Activated naive CD4-positive, alpha-beta T cell treated with anti-CD3 and anti-CD28 coated beads for 36 hours (primary cell): ENCODE measurements at regions of chr20 and their contacts with region 1.

Region 1: DNA sequence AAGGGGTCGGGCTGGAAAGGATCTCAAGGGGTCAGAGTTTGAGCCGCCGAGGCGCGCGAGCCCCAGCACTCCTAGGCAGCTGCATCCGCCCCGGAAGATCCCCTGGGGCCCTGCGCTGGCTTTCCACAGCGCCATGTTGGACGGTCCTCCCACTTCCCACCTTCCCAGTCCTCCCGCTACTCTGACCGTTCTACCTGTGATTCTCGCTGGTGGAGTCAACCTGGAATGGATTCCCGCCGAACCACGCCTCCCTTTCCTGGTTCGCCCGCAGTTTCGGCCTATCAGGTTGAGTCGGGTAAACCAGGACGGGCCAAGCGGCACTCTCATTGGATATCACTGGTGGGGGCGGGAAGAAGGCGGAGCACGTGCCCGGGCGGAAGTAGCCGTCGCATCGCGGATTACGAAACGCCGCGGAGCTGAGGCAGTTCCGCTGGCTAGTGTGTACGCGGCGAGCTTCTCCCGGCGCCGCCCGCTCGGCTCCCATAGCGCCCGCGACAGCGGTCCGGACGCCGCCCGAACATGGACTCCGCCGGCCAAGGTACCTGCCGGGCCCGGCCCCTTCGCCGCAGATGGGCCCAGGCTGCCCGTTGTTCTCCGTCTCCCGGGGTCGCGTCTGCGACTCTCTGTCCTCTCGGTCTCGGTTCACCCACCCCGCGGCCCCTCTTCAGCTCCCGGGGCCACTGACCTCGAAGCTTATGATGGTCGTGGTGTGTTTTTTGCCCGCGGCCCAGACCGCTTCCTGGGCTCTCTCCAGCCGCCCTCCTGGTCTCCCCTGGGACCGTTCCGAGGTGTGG is at the start of gene TPD52L2:
- DNase-seq: peak; percentile 99
- H3K4me3 Mint-ChIP-seq: peak within 1 kb of the TSS; percentile 87
- H3K27ac Mint-ChIP-seq: peak within 1 kb of the TSS; percentile 94
- H3K4me1 Mint-ChIP-seq: peaks cover 24% of the 10 kb centered on the region
- H3K27me3 Mint-ChIP-seq: no peaks in the 10 kb centered on the region
- total RNA-seq, gene TPD52L2: 38.2 to 38.9 TPM

Region 2: GRCh38 chr20:63580796-63581461 is 284.1 kb before region 1 on chr20:
- CTCF ChIA-PET with region 1: no interaction called
- intact Hi-C with region 1: loop called (anchors 2 kb)
- DNase-seq: peak; percentile 88
- H3K4me3 Mint-ChIP-seq: no peak overlapping the region
- H3K27ac Mint-ChIP-seq: no peak overlapping the region
- H3K4me1 Mint-ChIP-seq: peaks cover 5% of the 10 kb centered on the region
- H3K27me3 Mint-ChIP-seq: no peaks in the 10 kb centered on the region

Region 3: GRCh38 chr20:63657937-63658748 is 206.9 kb before region 1 on chr20 and contains the start of gene RTEL1:
- CTCF ChIA-PET with region 1: no interaction called
- intact Hi-C with region 1: loop called (anchors 1 kb)
- DNase-seq: peak; percentile 88
- H3K4me3 Mint-ChIP-seq: peak within 1 kb of the TSS; percentile 98
- H3K27ac Mint-ChIP-seq: peak within 1 kb of the TSS; percentile 93
- H3K4me1 Mint-ChIP-seq: peaks cover 38% of the 10 kb centered on the region
- H3K27me3 Mint-ChIP-seq: no peaks in the 10 kb centered on the region
- total RNA-seq, gene RTEL1: 33.6 to 34.8 TPM

Region 4: DNA sequence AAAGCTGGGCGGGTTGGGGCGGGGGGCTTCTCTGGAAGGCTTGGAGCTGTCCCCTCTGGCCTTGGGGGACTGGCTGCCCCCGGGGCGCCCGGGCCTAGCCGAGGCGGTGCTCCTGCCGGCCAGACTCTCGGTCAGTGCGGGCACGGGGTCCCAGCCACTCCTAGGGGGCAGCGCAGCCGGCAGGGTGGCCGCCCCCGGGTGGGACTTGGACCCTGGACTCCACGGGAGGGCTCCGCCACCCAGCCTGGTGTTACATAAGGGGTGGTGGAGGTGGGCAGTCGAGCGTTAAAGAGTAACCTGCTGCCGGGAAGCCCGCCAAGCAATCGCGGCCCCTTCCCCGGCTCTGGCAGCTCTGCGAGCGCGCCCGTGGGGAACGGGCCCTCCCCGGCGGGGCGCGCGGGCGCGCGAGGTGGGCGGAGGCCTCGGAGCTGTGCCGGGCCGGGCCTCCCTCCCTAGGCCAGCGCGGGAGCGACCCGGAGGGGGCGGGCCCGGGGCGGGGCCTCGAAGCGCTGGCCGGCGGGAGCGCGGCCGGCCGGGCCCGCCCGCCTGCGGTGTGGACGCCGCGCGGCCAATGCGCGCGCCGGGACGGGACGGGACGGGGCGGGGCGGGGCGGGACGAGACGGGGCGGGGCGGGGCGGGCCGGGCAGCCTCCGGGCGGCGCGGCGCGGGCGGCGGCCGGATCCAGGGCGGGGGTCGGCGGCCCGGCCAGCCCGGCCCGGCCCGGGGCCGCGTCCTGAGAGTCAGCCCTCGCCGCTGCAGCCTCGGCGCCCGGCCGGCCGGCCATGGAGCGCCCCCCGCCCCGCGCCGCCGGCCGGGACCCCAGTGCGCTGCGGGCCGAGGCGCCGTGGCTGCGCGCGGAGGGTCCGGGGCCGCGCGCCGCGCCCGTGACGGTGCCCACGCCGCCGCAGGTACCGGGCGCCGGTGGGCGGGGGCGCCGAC is 125.6 kb before region 1 on chr20 and contains the start of gene SLC2A4RG:
- CTCF ChIA-PET with region 1: no interaction called
- intact Hi-C with region 1: loop called (anchors 2 kb)
- DNase-seq: peak; percentile 58
- H3K4me3 Mint-ChIP-seq: peak within 1 kb of the TSS; percentile 50
- H3K27ac Mint-ChIP-seq: no peak within 1 kb of the TSS
- H3K4me1 Mint-ChIP-seq: peaks cover 22% of the 10 kb centered on the region
- H3K27me3 Mint-ChIP-seq: no peaks in the 10 kb centered on the region
- total RNA-seq, gene SLC2A4RG: 22.4 to 24.8 TPM

Region 5: GRCh38 chr20:63894358-63895201 is 29.5 kb after region 1 on chr20 and contains the start of gene DNAJC5:
- CTCF ChIA-PET with region 1: interaction called, 4 read pairs
- intact Hi-C with region 1: loop called (anchors 1 kb)
- DNase-seq: peak; percentile 94
- H3K4me3 Mint-ChIP-seq: peak within 1 kb of the TSS; percentile 95
- H3K27ac Mint-ChIP-seq: peak within 1 kb of the TSS; percentile 93
- H3K4me1 Mint-ChIP-seq: peaks cover 41% of the 10 kb centered on the region
- H3K27me3 Mint-ChIP-seq: no peaks in the 10 kb centered on the region
- total RNA-seq, gene DNAJC5: 19.4 to 19.5 TPM

Region 6: GRCh38 chr20:63980806-63981728 is 116.0 kb after region 1 on chr20 and contains the start of gene PRPF6:
- CTCF ChIA-PET with region 1: no interaction called
- intact Hi-C with region 1: loop called (anchors 1 kb)
- DNase-seq: peak; percentile 97
- H3K4me3 Mint-ChIP-seq: peak within 1 kb of the TSS; percentile 84
- H3K27ac Mint-ChIP-seq: peak within 1 kb of the TSS; percentile 94
- H3K4me1 Mint-ChIP-seq: peaks cover 52% of the 10 kb centered on the region
- H3K27me3 Mint-ChIP-seq: no peaks in the 10 kb centered on the region
- total RNA-seq, gene PRPF6: 39.4 to 40.2 TPM